ENCODE measurements at regions of chr15 and their contacts with region 1.

Region 1: DNA sequence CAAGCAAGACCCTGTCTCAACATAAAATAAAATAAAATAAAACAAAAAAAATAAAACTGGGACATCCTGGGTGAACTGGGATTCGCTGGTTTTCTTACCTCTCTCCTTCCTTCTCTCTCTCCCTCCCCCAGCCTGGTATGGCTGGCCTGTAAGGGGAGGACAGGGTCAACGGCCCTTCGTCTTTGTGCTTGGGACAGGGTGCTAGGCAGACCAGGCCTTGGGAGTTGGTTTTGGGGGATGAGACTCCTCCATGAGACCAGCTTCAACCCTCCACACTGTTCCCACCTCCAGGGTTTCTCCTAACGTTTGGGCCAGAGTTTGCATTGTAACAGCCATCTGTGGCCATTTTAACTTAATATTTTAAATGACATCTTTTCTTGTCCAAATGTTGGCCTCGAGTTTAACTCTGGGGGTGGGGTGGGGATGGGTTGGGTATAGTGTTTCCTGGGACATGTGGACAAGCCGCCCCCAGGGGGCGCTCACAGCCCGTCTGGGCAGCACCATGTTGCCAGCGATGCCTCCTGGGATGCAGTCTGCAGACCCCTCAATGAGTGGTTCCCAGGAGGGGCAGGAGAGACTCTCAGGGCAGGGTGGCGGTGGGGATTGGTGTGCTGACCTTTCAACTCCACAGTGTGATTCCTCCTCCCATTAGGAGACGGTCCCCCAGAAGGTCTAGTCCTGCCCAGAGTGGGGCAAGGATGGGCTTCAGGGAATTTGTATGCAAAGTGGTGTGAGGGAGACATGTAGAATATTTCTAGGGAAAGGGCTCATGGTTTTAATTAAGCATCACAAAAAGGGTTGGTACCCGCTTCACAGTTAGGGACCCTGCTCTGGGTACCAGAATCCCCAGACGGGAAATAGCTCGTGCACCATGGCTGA is 37.7 kb upstream of the LCTL start:
- DNase-seq: peak; percentile 90 to 93
- H3K4me3 ChIP-seq: no peak overlapping the region
- H3K4me1 ChIP-seq: no peaks in the 10 kb centered on the region
- H3K27me3 ChIP-seq: peaks cover 11% of the 10 kb centered on the region; the same call in 1 of the 2 replicates

Region 2: DNA sequence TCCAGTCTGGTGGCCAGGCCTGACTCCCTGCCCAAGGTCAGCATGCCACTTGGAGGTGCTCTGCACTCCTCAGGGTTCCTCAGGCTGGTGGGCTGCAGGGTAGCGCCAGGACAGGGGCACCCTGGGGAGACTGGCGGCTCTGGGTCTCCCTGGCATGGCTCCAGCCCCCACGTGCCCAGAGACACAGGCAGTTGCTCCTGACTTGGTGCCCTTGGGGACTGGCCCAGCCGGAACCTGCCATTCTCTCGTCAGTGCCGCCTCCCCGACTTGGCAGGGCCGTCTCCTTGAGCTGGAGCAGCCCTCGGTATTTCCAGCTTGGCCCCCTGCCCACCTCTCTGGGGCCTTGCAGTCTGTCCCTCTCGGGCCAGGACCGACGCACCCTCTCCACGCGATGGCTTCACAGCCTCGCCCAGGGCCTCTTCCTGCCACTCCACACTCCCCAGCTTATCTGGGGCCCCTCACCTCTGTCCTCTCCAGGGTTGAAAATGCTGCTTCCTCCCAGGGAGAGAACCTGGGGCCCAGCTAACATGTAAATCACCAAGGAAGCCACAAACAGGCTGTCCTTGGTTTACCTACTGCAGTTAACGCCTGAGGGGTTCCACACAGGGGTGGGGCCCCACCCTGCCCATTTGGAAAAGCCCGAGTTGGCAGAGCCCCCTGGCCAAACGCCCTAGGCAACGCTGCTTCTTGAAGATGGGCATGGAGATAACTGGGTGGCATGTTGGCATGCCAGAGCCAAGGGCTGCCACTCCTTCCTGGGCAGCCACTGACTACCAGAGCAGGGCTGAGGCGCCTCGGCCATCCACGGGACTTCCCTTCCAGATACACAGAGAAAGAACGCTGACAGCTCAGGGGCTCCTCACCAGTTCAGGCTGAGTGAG is 159.9 kb after region 1 on chr15:
- in situ Hi-C with region 1: no loop called
- DNase-seq: no peak
- H3K4me3 ChIP-seq: no peak overlapping the region
- H3K4me1 ChIP-seq: peaks cover 35% of the 10 kb centered on the region
- H3K27me3 ChIP-seq: no peaks in the 10 kb centered on the region

Region 3: GRCh38 chr15:66780172-66780972 is 176.8 kb after region 1 on chr15:
- in situ Hi-C with region 1: loop called (anchors 5 kb)
- DNase-seq: no peak
- H3K4me3 ChIP-seq: no peak overlapping the region
- H3K4me1 ChIP-seq: no peaks in the 10 kb centered on the region
- H3K27me3 ChIP-seq: no peaks in the 10 kb centered on the region

Region 4: DNA sequence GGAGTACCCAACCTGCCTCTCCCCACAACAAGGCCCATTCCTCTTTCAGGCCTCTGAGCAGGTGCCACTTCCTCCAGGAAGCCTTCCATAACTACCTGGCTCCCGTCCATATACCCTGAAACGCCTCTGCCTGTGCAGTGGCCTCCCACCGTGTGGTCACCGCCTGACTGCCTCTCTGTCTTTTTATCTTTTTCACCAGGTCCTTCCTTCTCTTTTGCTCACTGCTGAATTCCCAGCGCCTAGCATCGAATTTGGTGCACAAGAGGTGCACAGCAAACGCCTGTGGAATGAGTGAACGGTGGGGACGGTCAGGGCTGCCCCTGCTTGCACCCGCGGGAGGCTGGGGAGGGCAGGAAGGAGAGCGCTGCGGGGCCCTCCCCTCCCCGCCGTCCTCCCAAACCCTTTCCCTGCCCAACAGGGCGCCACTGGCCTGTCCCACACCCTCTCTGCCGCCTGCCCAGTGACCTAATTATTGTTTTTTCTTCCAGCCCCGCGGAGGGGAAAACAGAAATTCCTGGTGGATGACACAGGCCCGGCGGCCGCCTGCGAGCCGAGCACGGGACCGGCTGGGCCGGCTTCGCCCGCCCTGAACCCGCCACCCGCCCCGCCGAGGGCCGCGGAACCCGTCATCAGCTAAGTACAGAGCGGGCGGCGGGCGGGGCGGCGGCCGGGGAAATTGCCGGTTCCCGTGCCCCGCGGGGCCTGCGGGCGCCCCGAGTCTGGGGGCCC is 238.6 kb after region 1 on chr15:
- in situ Hi-C with region 1: loop called (anchors 5 kb)
- DNase-seq: peak in 1 of 2 experiments; percentile 75
- H3K4me3 ChIP-seq: peak overlapping the region; percentile 28
- H3K4me1 ChIP-seq: peaks cover 5% of the 10 kb centered on the region
- H3K27me3 ChIP-seq: no peaks in the 10 kb centered on the region

Region 5: GRCh38 chr15:66882251-66883020 is 278.9 kb after region 1 on chr15:
- in situ Hi-C with region 1: no loop called
- DNase-seq: peak in 1 of 2 experiments; percentile 12
- H3K4me3 ChIP-seq: no peak overlapping the region
- H3K4me1 ChIP-seq: peaks cover 12% of the 10 kb centered on the region
- H3K27me3 ChIP-seq: no peaks in the 10 kb centered on the region

Measured in HAP-1 (cell line).